ENCODE measurements at regions of chr11 and their contacts with region 1.

Region 1: GRCh38 chr11:100687630-100688395 is 725 bp downstream of the ARHGAP42 start:
- DNase-seq: peak; percentile 31
- H3K4me3 ChIP-seq: peak overlapping the region; percentile 81
- H3K27ac ChIP-seq: peak overlapping the region; percentile 89
- H3K4me1 ChIP-seq: peaks cover 53% of the 10 kb centered on the region
- H3K27me3 ChIP-seq: no peaks in the 10 kb centered on the region
- CTCF ChIP-seq: peak; percentile 75

Region 2: GRCh38 chr11:100827934-100828661 is 140.3 kb after region 1 on chr11:
- intact Hi-C with region 1: loop called (anchors 10 kb)
- DNase-seq: no peak
- H3K4me3 ChIP-seq: no peak overlapping the region
- H3K27ac ChIP-seq: no peak overlapping the region
- H3K4me1 ChIP-seq: peaks cover 48% of the 10 kb centered on the region
- H3K27me3 ChIP-seq: no peaks in the 10 kb centered on the region
- CTCF ChIP-seq: peak; percentile 21